ENCODE measurements at regions of chr17 and their contacts with region 1.

Region 1: DNA sequence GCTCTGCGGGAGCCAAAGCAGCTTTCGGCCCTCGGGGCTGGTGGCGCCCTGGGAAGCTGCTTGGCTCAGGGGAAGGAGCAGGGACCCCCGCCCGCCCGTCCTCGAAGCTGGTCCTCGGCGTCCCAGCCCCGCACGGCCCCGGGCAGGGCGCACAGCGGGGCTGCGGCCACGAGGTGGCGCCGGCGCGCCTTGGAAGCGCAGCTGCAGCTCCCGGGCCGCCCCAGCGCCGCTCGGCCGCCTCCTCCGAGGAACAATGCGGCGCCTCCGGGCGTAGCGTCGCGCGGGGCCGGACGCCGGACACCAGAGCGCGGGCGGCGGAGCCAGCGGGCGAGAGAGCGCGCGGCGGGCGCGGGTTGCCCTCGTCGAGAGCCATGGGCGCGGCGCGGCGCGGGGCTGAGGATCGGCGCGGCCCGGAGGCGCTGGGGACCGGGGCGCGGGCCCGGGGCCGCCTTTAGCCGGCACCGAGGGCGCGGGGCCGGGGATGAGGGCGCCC is at the start of gene MGAT5B:
- DNase-seq: peak; percentile 92
- ATAC-seq: peak; percentile 97
- total RNA-seq, gene MGAT5B: not detected

Region 2: GRCh38 chr17:77054936-77055335 is 186.7 kb after region 1 on chr17:
- intact Hi-C with region 1: loop called (anchors 5 kb)
- DNase-seq: no peak
- ATAC-seq: no peak